Activated CD4-positive, alpha-beta memory T cell treated with anti-CD3 and anti-CD28 coated beads, Interleukin-2, amount 10 ng/mL, durations not matched to agents 7 days and 5 days (primary cell): ENCODE measurements at regions of chr3 and their contacts with region 1.

Region 1: DNA sequence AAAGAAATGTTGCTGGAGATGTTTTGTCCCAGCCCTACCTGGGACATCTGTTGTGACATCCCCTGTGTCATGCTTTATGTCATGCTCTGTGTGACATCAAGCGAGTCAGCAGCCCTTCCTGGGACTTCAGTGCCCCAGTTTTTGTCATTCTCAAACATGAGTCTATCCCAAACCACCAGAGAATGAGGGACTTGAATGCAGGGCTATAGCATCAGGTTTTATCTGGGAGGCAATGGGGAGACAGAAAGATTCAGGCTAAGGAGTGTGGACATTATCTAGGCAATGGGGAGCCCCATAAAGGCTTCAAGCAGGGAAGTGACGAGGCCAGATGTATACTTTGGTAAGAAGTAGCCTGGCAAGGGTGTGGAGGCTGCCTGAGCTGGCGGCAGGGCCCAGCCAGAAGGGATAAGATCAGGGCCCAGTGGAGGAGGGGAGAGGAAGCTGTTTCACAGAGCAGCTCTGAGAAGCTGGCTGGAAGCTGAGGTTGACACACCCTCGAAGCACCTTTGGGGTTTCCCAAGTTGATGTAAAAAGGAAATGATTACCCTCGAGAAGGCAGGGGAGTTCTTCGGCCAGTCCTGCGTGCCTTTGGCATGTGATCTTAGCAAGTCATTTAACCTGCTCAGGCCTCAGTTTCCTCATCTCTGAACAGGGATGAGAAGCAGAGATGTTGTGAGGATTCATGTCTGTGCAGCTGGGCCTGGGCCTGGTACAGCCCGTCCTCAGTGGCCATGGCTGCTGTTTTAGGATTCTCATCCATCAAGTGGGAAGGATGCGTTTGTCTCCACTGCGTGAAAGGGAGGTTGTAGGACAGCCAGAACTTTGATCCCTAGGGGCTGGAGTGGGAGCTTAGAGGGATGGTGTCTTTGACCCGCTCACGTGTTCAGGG is 34.3 kb downstream of the IRAK2 start:
- DNase-seq: peak; percentile 85
- H3K4me3 Mint-ChIP-seq: peak overlapping the region; percentile 31
- H3K27ac Mint-ChIP-seq: peak overlapping the region; percentile 94
- H3K4me1 Mint-ChIP-seq: peaks cover 79% of the 10 kb centered on the region
- H3K27me3 Mint-ChIP-seq: no peaks in the 10 kb centered on the region

Region 2: GRCh38 chr3:9884555-9885165 is 314.3 kb before region 1 on chr3:
- CTCF ChIA-PET with region 1: no interaction called
- POLR2A ChIA-PET with region 1: no interaction called
- DNase-seq: no peak
- H3K4me3 Mint-ChIP-seq: no peak overlapping the region
- H3K27ac Mint-ChIP-seq: no peak overlapping the region
- H3K4me1 Mint-ChIP-seq: peaks cover under 1% of the 10 kb centered on the region
- H3K27me3 Mint-ChIP-seq: no peaks in the 10 kb centered on the region

Region 3: DNA sequence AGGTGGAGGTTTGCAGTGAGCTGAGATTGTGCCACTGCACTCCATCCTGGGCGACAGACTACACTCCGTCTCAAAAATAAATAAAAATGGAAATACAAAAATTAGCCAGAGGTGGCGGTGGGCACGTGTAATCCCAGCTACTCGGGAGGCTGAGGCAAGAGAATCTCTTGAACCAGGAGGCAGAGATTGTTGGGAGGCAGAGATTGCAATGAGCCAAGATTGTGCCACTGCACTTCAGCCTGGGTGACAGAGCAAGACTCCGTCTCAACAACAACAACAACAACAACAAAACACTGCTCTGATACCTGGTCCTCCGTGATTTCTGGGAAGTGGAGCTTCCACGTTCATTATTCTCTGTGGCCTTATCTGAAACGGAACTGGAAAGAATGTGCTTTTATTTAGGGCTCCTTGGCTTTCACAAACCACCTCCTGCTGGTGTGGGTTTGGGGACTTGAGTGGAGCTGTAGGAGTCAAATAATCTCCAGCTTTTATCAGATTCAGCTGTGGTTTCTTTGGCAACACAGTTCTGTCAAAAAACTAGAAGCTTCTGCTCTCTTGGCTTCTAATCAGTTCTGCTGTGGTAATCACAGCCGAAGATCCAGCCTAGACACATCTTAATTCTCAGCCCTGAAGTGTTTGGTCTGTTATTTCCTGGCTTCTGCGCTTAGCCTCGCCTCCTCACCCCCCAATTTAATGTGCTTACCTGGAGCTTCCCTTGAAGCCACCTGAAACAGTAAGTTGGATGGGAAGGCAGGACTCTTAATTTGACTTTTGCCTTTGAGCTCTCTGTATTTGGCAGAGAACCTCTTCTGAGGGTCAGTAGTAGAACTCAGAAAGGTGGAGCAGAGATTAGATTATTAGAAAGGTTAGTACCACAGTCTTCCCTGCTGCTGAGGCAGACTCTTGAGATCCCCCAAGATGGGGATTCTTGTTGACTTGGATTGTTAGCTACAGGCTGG is 12.9 kb before region 1 on chr3:
- CTCF ChIA-PET with region 1: interaction called, 9 read pairs
- POLR2A ChIA-PET with region 1: interaction called, 18 read pairs
- DNase-seq: peak; percentile 33
- H3K4me3 Mint-ChIP-seq: peak overlapping the region; percentile 18
- H3K27ac Mint-ChIP-seq: peak overlapping the region; percentile 78
- H3K4me1 Mint-ChIP-seq: peaks cover 55% of the 10 kb centered on the region
- H3K27me3 Mint-ChIP-seq: no peaks in the 10 kb centered on the region